A549 (cell line): ENCODE measurements at regions of chr22 and their contacts with region 1.

Region 1: DNA sequence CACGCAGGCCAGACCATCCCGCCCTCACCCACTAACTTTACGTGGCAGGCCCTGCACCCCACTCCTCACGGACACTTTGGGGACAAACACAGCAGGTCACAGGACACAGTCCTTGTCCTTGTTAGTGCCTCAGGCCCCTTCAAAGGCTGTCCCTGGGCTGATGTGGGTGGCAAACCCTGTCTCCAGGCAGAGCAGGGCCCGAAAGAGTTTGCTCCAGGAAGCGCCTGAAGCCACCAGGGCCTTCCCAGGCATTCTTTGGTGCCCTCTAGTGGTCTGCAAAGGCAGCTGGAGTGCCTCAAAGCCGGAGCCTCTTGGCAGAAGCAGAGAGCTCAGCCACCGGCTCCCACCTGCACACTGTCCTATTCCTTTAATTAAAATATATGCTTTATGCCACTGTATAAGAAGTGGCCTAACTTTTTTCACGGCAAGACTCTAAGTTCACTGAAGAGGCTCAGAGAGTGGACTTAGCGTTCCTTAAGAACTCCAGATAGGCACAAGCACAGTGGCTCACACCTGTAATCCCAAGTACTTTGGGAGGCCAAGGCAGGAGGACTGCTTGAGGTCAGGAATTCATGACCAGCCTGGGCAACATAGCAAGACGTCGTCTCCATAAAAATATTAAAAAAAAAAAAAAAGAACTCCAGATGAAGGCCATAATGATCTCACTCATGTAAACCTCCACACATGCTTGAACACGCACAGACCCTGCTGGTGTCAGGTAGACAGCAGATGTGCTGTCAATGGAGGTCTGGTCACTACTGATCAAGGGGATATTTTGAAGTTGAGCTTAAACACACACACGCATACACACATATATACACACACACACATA is 11.1 kb downstream of the TXN2 start:
- DNase-seq: peak; percentile 55 to 84
- ATAC-seq: peak; percentile 77 to 84
- H3K4me3 ChIP-seq: no peak overlapping the region
- H3K27ac ChIP-seq: peak overlapping the region; percentile 69 to 98
- H3K4me1 ChIP-seq: peaks cover 50% of the 10 kb centered on the region
- CTCF ChIP-seq: peak; percentile 80
- EP300 ChIP-seq: no peak
- POLR2A ChIP-seq: no peak
- RAD21 ChIP-seq: peak; percentile 93 to 96

Region 2: DNA sequence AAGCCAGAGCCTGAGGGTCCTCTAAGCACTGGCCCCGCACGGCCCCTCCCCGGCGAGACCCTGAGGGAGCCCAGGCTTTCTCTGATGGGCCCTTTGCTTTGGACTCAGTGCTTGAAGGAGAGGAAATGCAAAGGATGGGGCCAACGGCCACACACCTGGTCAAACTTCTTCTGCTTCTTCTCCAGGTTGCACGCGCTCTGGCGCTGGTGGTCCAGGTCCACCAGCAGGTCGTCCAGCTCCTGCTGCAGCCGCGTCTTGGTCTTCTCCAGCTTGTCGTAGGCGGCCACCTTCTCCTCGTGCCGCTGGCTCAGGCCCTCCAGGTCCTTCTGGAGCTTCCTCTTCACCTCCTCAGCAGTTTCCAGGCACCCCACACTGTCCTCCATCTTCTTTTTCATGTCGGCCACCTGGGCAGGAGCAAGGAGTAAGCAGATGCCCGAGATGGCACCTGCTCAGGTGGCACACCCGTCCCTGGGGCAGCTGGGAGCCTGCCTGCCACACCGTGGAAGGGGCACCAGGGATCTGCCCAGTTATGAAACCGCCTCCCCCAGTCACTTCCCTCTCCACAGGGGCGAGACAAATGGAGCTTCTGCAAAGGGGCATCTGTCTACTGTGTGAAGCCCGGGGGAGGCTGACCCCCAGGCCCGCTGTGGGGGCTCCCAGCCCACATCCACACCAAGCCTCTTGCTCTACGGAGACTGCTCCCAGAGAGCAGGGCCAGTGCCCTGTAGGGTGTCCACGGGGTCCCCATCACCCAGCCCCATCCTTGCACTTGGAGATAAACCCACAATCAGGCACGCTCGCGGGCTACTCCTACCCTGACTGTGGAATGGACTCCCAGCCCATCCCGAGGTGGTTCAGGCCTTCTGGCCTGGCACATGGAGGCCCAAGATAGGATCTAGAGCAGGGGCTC is 178.3 kb before region 1 on chr22:
- CTCF ChIA-PET with region 1: interaction called, 14 read pairs
- POLR2A ChIA-PET with region 1: no interaction called
- DNase-seq: no peak
- ATAC-seq: no peak; a peak in 2 of 6 replicates
- H3K4me3 ChIP-seq: no peak overlapping the region
- H3K27ac ChIP-seq: no peak overlapping the region
- H3K4me1 ChIP-seq: no peaks in the 10 kb centered on the region
- CTCF ChIP-seq: no peak
- EP300 ChIP-seq: no peak
- POLR2A ChIP-seq: no peak
- RAD21 ChIP-seq: no peak

Region 3: GRCh38 chr22:36323182-36323854 is 147.1 kb before region 1 on chr22:
- CTCF ChIA-PET with region 1: interaction called, 14 read pairs
- POLR2A ChIA-PET with region 1: no interaction called
- DNase-seq: no peak
- ATAC-seq: no peak
- H3K4me3 ChIP-seq: no peak overlapping the region
- H3K27ac ChIP-seq: peak overlapping the region in 1 of 2 experiments; percentile 99; a peak in 2 of 6 replicates
- H3K4me1 ChIP-seq: peaks cover 38% of the 10 kb centered on the region
- CTCF ChIP-seq: no peak
- EP300 ChIP-seq: no peak
- POLR2A ChIP-seq: no peak
- RAD21 ChIP-seq: no peak

Region 4: DNA sequence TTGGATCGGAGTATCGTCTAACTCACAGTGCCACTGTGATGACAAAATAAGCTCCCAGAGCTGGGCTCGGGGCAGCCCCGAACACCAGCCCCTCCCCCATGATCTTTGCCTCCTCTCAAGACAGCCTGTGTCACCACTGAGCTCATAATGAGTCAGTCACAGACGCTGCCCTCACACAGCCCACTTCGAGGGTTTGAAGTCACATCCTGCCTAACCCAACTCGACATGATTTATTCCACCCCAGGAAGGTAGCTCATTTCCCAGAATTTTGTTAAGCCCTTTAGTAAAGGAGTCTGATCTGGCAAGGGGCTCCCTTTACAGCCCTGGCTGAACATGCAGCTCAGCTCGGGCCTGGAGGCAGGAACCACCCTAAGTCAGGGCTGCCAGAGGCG is 105.4 kb before region 1 on chr22:
- CTCF ChIA-PET with region 1: interaction called, 16 read pairs
- POLR2A ChIA-PET with region 1: no interaction called
- DNase-seq: peak; percentile 75 to 89
- ATAC-seq: peak; percentile 55 to 57
- H3K4me3 ChIP-seq: peak overlapping the region; percentile 17; the same call in 1 of the 3 replicates
- H3K27ac ChIP-seq: peak overlapping the region; percentile 83 to 99
- H3K4me1 ChIP-seq: peaks cover 100% of the 10 kb centered on the region
- CTCF ChIP-seq: no peak
- EP300 ChIP-seq: peak in 1 of 2 experiments; percentile 53; a peak in 2 of 5 replicates
- POLR2A ChIP-seq: no peak
- RAD21 ChIP-seq: 0 out of 5 replicates have a peak, but pooled peaks of 1 of the 2 experiments have one; percentile 15

Region 5: DNA sequence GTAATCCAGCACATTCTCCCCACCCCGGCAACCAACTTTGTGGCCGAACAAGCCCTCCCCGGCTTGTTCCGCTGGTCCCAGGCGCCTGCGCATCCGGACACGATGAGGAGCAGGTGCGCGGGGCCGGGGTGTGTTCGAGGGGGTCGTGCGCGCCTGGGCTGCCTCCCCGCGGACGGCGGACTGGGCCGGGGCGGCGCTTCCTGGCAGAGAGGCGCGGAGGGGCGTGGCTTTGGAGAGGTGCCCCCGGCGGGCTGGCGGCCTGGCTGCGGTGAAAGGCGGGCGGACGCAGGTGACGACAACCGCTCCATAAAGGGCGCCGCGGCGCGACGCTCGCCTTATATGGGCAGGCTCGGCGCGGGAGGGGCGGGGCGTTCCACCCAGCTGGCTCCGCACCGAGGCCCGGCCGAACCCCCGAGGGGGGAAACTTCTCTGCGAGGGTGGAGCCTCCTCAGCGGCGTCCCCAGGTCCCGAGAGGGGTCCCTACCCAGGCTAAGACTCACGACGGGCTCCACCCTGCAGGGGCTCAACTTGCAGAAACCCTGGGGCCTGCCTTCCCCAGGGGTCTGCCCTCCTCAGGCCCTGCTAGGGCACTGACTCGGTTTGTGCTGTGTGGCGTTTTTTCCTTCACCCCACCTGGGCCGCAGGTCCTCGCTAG is 15.3 kb before region 1 on chr22:
- CTCF ChIA-PET with region 1: interaction called, 14 read pairs
- POLR2A ChIA-PET with region 1: interaction called, 3 read pairs
- DNase-seq: peak; percentile 73 to 94
- ATAC-seq: peak; percentile 88
- H3K4me3 ChIP-seq: peak overlapping the region; percentile 47
- H3K27ac ChIP-seq: peak overlapping the region; percentile 95 to 98
- H3K4me1 ChIP-seq: peaks cover 48% of the 10 kb centered on the region
- CTCF ChIP-seq: peak; percentile 16; the same call in 1 of the 3 replicates
- EP300 ChIP-seq: no peak
- POLR2A ChIP-seq: peak; percentile 38
- RAD21 ChIP-seq: peak in 1 of 2 experiments; percentile 52; a peak in 2 of 5 replicates

Region 6: GRCh38 chr22:36481393-36482168 is 11.2 kb after region 1 on chr22 and contains the start of gene TXN2:
- CTCF ChIA-PET with region 1: interaction called, 11 read pairs
- POLR2A ChIA-PET with region 1: interaction called, 3 read pairs
- DNase-seq: peak; percentile 88 to 94
- ATAC-seq: peak; percentile 95 to 98
- H3K4me3 ChIP-seq: peak within 1 kb of the TSS; percentile 63
- H3K27ac ChIP-seq: peak within 1 kb of the TSS; percentile 89 to 99
- H3K4me1 ChIP-seq: peaks cover 6% of the 10 kb centered on the region; the same call in 1 of the 3 replicates
- CTCF ChIP-seq: no peak
- EP300 ChIP-seq: no peak
- POLR2A ChIP-seq: peak; percentile 66
- RAD21 ChIP-seq: no peak
- polyA plus RNA-seq, gene TXN2: 84.5 and 89.6 TPM in 2 replicates